KBM-7 (cell line): ENCODE measurements at regions of chr18 and their contacts with region 1.

Region 1: DNA sequence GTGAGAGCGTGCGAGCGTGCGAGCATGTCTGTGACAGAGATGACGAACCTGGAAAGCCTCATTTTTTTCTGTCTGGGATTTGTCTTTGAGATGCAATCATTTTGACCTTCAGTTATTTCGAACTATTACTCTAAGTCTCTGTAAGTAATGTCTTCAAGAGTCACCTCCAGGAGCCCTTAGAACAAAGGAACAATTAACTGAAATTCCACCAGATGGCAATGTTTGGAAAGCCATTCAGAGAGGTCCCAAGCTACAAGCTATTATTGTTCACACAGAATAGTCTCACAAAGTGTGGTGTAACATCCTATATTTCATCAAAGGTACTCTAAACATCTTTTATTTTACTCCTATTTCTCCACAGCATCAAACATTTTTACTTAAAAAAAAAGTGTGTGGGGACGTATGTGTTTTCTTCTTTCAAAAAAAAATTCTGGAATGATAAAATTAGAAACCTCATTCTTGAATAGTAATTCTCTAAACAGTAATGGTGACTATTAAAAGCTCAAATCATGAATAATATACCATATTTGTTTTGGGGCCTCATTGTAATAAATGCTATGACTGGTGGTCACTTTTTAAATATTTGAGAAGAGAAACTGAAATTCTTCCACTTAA is 35.1 kb upstream of the MAPRE2 start:
- DNase-seq: peak; percentile 81

Region 2: DNA sequence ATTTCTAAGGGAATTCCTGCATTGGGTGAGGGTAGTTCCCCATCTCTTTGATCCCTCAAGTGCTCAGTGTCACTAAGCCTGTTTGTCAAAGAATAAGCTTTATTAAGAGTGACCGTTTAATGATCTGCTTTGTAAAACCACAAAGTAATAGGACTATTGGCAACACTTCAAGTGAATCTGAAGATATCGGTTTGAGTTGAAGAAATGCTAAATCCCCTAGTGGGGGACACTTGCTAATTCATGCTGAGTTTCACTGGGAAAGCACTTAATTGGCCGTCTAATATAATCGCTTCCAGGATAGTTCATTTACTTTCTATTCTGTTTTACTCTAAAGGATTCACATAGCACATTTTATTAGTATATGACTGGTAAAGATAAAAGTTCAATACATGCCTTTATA is 241.6 kb before region 1 on chr18:
- in situ Hi-C with region 1: no loop called
- DNase-seq: no peak

Region 3: GRCh38 chr18:35117951-35118411 is 111.9 kb after region 1 on chr18:
- in situ Hi-C with region 1: no loop called
- DNase-seq: no peak

Region 4: DNA sequence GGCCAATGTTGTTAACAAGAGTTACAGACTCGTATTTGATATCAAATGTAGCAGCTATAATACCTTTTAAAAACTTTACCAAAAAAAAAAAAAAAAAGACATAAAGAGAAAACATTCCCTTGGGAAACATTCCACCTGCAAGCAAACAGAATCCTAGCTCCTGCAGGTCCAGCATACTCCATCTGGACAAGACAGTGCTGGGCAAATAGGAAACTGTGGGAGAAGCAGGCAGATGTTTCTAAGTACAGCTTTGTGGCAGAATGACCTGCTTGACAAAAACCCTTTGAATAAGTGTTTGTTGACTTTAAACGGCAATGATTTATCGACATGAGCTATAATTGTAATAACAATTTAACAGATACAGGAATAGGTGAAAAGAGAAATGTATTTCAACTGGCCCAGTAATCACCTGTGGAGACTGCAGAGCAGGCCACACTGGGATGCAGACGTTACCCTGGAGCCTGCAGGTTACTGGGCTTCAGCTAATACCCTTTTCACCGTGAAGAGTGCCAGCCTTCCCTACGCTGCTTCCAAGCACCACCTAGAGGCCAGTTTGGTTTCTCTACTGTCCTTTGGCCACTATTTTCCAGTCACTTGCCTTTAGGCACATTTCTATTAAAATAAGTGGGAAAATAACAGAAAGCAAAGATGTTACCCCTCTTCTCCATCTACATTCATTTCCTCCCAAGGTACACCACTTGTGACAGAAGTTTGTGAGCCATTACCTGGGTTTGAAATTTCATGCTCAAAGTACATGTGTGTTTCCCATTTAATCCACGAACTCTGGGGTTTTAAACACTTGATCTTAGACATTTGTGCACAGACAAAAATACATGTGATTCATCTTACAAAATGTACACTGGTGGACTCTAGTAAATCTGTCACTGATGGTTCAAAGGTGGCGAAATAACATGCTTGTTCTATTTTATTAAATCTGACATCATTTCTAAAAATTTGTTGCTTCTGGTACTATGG is 137.8 kb after region 1 on chr18:
- in situ Hi-C with region 1: loop called (anchors 25 kb)
- DNase-seq: peak; percentile 66

Region 5: GRCh38 chr18:35215026-35215425 is 209.0 kb after region 1 on chr18:
- in situ Hi-C with region 1: no loop called
- DNase-seq: no peak

Region 6: GRCh38 chr18:35386600-35387351 is 380.7 kb after region 1 on chr18:
- in situ Hi-C with region 1: loop called (anchors 25 kb)
- DNase-seq: peak; percentile 67

Region 7: GRCh38 chr18:35549564-35549963 is 543.5 kb after region 1 on chr18:
- in situ Hi-C with region 1: no loop called
- DNase-seq: peak; percentile 20